Esophagus muscularis mucosa (tissue), 4 donors: ENCODE measurements at regions of chr13 and their contacts with region 1.

Region 1: DNA sequence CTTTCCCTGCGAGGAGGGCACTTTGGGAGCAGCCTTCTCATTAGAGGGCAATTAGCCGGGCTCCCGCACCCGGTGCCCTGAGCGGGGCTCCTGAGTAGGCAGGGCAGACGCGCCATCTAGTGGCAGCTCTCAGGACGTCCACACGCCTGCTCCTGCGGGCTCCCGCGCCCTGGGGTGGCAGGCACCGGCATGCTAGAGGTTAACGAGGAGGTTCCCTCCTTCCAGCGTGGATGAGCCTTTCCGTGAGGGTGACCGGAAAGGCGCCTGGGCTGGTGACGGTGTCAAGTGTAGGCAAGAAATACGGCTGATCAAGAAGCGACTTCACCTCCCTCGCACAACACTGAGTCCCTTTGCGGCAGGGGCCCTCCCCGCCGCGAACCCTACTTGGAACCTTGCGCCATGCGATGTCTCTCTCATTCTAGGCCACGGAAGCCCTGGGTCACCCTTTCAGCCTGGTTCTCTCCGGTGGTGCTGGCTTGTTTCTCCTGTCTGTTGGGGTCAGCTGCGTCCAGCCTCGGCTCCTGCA is 67.7 kb downstream of the ALOX5AP start:
- DNase-seq: peak; percentile 94
- H3K4me3 ChIP-seq: peak overlapping the region; percentile 45 to 60 (median 50)
- H3K27ac ChIP-seq: peak overlapping the region; percentile 37 to 77 (median 68)
- H3K4me1 ChIP-seq: peaks cover 18 to 50% (median 43%) of the 10 kb centered on the region in 4 donors
- H3K27me3 ChIP-seq: peaks cover 0 to 5% (median 0%) of the 10 kb centered on the region in 4 donors
- CTCF ChIP-seq: peak in 2 of 3 experiments; percentile 92 to 93
- EP300 ChIP-seq: no peak
- POLR2A ChIP-seq: no peak

Region 2: DNA sequence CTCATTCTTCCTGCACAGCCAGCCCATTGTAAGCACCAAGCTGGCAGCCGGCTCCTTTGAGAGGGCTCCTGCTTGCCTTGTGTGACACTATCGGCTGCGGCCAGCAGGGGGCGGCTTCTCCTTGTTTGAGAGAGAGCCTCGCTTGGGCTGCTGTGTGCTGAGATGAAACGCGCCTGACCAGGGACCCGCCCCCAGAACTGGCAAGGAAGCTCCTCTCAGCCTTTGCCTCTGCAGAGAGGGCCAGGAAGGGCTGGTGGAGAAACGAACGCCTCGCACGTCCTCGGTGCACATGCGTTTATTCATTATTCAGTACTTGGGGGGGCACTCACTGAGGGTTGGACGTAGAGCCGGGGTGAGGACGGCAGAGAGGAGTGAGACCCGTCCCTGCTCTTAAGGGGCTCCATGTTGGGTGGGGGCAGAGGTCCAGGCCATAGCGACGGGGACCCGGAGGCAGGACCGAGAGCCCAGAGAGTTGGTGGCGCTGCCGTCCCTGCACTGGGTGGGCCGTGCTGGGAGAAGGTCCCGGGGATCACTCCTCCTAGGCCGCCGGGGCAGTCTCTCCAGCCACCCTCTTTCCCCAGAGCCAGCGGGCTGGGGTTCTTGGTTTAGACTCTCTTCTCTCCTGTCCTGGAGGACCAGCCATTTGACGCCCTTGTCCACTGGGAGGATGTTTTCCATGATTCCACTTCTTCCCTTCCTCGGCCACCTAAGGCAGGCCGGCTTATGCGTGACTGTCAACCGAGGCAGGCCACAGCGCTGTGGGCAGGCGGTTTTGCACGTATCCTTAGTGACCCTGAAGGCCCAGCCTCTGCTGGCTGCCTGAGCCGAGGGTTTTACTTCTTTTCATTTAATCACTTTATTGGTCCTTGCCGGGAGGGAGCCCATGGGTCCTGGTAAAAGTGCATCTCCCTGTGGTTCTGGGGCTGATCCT is 670.1 kb before region 1 on chr13:
- intact Hi-C with region 1: loop called (anchors 5 kb)
- DNase-seq: peak; percentile 99
- H3K4me3 ChIP-seq: peak overlapping the region in 2 of 4 donors; percentile 14 to 27
- H3K27ac ChIP-seq: no peak overlapping the region
- H3K4me1 ChIP-seq: peaks cover 6 to 22% (median 17%) of the 10 kb centered on the region in 4 donors
- H3K27me3 ChIP-seq: no peaks in the 10 kb centered on the region
- CTCF ChIP-seq: peak; percentile 94 to 95 (median 95)
- EP300 ChIP-seq: no peak
- POLR2A ChIP-seq: no peak

Region 3: DNA sequence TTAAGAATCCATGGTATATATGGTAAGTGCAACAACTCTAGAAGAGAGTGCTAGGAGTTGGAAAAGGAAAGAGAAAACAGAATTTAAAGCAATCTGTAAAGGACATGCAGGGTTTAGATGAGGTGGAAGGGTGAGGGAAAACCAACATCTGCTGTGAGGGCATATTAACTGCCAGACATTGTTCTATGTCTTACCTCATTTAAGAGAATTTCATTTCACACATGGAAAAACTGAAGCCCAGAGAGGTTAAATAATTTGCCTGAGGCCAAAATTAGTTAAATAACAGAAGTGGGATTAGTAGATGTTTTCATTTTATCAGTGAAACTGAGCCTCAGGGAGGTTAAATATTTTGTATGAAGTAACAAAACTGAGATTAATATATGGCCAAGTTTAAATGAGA is 192.7 kb before region 1 on chr13:
- intact Hi-C with region 1: loop called (anchors 5 kb)
- DNase-seq: no peak
- H3K4me3 ChIP-seq: no peak overlapping the region
- H3K27ac ChIP-seq: no peak overlapping the region
- H3K4me1 ChIP-seq: peaks cover 4 to 19% (median 13%) of the 10 kb centered on the region in 4 donors
- H3K27me3 ChIP-seq: no peaks in the 10 kb centered on the region
- CTCF ChIP-seq: no peak
- EP300 ChIP-seq: no peak
- POLR2A ChIP-seq: no peak

Region 4: DNA sequence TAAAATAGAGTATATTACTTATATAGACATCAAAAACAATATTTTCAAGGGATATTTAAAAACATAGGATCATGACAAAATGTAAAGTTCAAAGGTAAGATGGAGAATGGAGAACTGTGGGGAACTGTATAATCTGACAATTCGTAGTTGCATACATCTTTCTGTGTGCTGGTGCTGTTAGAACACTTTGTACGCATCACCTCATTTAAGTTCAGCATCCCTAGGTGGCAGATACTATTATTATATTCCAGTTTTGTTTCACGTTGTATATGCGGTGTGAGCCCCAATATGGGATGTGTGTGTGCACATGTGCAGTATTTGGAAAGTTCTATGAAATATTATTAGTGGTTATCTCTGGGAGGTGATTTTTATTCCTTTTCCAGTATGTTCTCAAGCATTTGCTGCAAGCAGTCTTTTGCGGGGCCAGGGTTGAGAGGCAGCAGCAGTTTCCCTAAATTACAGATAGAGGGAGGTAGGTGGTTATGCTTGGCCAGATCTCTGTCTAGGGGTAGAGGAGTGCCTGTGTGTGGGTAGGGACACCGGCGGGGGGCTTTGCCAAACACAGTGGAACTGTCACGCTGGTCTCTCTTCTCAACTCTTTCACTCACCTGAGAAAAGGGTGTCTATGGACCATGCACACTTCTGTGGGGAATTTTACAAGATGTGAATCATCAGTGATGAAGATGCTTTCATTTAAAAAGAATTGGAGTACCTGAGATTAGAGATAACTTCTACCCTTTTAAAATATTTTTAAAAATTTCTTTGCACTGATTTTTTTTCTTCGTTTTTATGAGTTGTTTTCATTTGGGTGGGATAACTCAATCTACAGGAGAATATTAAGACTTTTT is 123.3 kb before region 1 on chr13:
- intact Hi-C with region 1: loop called (anchors 5 kb)
- DNase-seq: no peak
- H3K4me3 ChIP-seq: no peak overlapping the region
- H3K27ac ChIP-seq: no peak overlapping the region
- H3K4me1 ChIP-seq: peaks cover 0 to 14% (median 10%) of the 10 kb centered on the region in 4 donors
- H3K27me3 ChIP-seq: no peaks in the 10 kb centered on the region
- CTCF ChIP-seq: peak; percentile 57 to 67 (median 64)
- EP300 ChIP-seq: no peak
- POLR2A ChIP-seq: no peak

Region 5: DNA sequence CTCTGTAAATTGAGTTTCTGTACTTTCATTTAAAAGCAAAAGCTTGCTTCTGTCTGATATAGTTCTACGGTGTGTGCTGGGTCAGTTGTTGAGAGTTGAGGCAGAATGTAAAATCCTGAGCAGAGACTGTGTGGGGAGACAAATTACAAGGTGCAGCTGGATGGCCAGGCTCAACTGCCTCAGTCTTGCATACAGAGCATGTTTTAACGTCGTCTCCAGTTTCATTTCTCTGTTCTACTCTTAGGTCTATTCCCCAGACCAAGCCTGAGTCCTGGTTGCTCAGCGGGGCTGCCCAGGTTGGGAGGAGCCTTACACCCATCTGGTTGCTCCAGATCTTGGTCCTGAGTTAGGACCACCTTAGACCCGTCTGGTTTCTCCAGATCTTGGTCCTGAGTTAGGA is 48.7 kb after region 1 on chr13:
- intact Hi-C with region 1: loop called (anchors 5 kb)
- DNase-seq: no peak
- H3K4me3 ChIP-seq: no peak overlapping the region
- H3K27ac ChIP-seq: no peak overlapping the region
- H3K4me1 ChIP-seq: peaks cover 0 to 5% (median 0%) of the 10 kb centered on the region in 4 donors
- H3K27me3 ChIP-seq: no peaks in the 10 kb centered on the region
- CTCF ChIP-seq: no peak
- EP300 ChIP-seq: no peak
- POLR2A ChIP-seq: no peak

Region 6: GRCh38 chr13:31044377-31045285 is 241.6 kb after region 1 on chr13:
- intact Hi-C with region 1: loop called (anchors 10 kb)
- DNase-seq: peak; percentile 97
- H3K4me3 ChIP-seq: no peak overlapping the region
- H3K27ac ChIP-seq: no peak overlapping the region
- H3K4me1 ChIP-seq: peaks cover 23 to 35% (median 30%) of the 10 kb centered on the region in 4 donors
- H3K27me3 ChIP-seq: no peaks in the 10 kb centered on the region
- CTCF ChIP-seq: peak; percentile 82 to 97 (median 89)
- EP300 ChIP-seq: no peak
- POLR2A ChIP-seq: no peak